Ovary (tissue), 10 donors: ENCODE measurements at regions of chr19 and their contacts with region 1.

Region 1: DNA sequence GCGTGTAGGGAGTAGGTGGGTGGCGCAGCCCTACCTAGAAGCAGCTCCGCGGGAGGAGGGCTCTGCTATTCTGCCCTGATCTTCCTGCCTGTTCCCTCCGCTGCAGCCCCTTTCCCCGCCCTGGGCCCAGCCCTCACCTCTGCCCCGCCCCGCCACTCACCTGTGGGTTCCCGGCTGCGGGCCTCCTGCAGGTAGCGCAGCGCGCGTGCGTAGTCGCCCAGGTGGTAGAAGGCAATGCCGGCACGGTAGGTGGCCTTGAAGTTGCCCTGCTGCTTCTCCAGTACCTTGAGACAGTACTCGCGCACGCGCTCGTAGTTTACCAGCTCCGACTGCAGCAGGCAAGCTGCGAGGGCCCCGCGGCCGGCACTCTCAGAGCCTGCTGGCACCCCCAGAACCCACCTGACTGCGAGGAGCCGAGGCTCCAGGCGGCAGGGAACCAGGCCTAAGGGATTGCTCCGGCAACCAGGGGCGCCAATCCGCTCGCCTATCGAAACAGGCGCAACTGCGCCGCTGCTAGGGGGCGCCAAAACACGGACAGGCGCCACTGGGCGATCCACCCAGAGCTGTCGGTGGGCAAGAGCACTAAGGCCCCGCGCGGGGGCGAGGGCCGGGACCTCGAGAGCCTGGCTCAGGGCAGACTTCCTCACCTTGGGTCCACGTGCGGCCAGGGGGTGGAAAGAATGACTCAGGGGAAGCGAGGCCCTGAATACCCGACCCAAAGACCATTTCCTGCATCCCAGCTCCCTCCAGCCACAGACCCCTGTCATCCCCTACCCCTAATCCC is 965 bp downstream of the TTC9B start:
- DNase-seq: no peak
- H3K4me3 ChIP-seq: no peak overlapping the region
- H3K27ac ChIP-seq: no peak overlapping the region
- H3K4me1 ChIP-seq: no peaks in the 10 kb centered on the region
- H3K27me3 ChIP-seq: peaks cover 5% of the 10 kb centered on the region
- CTCF ChIP-seq: no peak
- EP300 ChIP-seq: no peak
- POLR2A ChIP-seq: no peak

Region 2: GRCh38 chr19:39539519-39540332 is 677.5 kb before region 1 on chr19 and contains the start of gene EID2:
- intact Hi-C with region 1: loop called in 1 of 4 experiments (anchors 10 kb)
- DNase-seq: peak; percentile 94 to 97 (median 95)
- H3K4me3 ChIP-seq: peak within 1 kb of the TSS; percentile 60
- H3K27ac ChIP-seq: peak within 1 kb of the TSS; percentile 88 to 93
- H3K4me1 ChIP-seq: no peaks in the 10 kb centered on the region
- H3K27me3 ChIP-seq: no peaks in the 10 kb centered on the region
- CTCF ChIP-seq: peak; percentile 81 to 87 (median 84)
- EP300 ChIP-seq: no peak
- POLR2A ChIP-seq: peak; percentile 87
- total RNA-seq, gene EID2: 6.9 to 17.0 (median 13.1) TPM

Region 3: DNA sequence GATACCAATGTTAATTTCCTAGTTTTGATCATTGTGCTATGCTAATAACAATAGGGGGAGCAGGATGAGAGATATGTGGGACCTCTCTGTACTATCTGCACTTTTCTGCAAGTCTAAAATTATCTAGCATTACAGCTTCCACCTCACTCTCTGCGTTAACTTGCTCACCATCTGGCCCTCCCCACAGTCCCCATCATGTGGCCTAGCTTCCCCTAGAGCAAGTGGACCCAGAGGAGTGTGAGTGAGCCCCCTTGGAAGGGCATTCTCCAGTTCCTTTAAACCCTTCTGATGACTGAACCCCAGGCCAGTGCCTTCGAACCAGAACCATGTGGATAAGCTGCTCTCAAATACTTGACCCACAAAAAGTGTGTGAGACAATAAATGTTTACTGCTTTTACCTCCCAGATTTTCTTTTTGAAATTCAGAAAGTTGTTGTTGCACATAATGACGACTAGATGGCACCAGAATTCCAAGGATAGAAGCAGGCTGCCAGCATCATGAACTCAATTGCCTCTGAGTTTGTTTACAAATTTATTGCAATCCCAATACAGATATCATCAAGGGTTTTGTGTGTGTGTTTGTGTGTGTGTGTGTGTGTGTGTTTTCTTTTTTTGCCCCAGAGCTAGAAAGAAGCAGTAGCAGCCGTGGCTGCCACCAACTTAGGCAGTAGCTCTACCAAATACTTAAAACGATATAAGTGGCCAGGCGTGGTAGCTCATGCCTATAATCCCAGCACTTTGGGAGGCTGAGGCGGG is 77.5 kb before region 1 on chr19:
- intact Hi-C with region 1: loop called in 3 of 4 experiments (anchors 2 to 10 kb)
- DNase-seq: no peak
- H3K4me3 ChIP-seq: no peak overlapping the region
- H3K27ac ChIP-seq: no peak overlapping the region
- H3K4me1 ChIP-seq: no peaks in the 10 kb centered on the region
- H3K27me3 ChIP-seq: no peaks in the 10 kb centered on the region
- CTCF ChIP-seq: peak; percentile 17 to 42 (median 30)
- EP300 ChIP-seq: no peak
- POLR2A ChIP-seq: no peak

Region 4: GRCh38 chr19:40178756-40179155 is 38.5 kb before region 1 on chr19:
- intact Hi-C with region 1: no loop called
- DNase-seq: no peak
- H3K4me3 ChIP-seq: no peak overlapping the region
- H3K27ac ChIP-seq: no peak overlapping the region
- H3K4me1 ChIP-seq: no peaks in the 10 kb centered on the region
- H3K27me3 ChIP-seq: no peaks in the 10 kb centered on the region
- CTCF ChIP-seq: no peak
- EP300 ChIP-seq: no peak
- POLR2A ChIP-seq: no peak